AG04450 (cell line): ENCODE measurements at regions of chr11 and their contacts with region 1.

Region 1: DNA sequence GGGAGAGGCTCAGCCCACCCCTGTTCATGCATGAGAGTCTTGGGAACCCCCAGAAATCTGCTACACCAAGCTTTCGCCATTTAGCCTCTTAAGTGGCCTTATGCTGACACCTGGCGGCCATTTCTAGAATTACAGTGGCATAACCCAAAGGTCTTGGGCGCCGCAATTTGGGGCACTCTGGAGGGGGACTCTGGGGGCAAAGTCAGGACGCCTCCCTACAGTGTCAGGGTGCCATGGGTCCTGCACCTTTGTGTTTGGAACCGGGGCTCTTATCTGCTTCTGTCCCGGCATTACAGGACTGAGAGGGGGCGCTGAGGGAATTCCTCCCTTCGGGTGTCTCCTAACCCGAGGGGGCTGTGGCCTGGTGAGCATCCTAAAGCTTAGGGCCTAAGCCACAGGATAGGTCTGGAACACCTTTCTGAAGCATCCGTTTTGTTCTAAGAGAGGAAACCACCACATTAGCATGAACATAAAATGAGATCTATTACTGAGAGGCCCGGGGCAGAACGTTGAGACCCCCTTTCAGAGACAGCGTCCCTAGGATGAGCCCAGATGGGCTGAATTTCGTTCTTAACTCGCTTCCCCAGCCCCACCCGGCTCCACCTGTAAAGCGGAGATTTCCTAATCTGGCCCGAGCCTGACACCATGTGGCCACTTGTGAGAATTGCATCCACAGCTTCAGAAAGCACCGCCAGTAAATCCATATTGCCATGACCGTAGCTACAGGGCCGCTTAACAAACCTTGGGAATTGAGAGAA is 9.3 kb downstream of the INS start:
- DNase-seq: peak; percentile 27
- H3K4me3 ChIP-seq: no peak overlapping the region
- H3K27ac ChIP-seq: no peak overlapping the region
- H3K27me3 ChIP-seq: peaks cover 49% of the 10 kb centered on the region
- CTCF ChIP-seq: peak; percentile 78

Region 2: GRCh38 chr11:1882519-1883238 is 269.0 kb before region 1 on chr11:
- CTCF ChIA-PET with region 1: interaction called, 47 read pairs
- POLR2A ChIA-PET with region 1: no interaction called
- DNase-seq: peak; percentile 15
- H3K4me3 ChIP-seq: no peak overlapping the region
- H3K27ac ChIP-seq: no peak overlapping the region
- H3K27me3 ChIP-seq: peaks cover 13% of the 10 kb centered on the region
- CTCF ChIP-seq: peak; percentile 86

Region 3: GRCh38 chr11:1953489-1954266 is 198.0 kb before region 1 on chr11:
- CTCF ChIA-PET with region 1: interaction called, 39 read pairs
- POLR2A ChIA-PET with region 1: no interaction called
- DNase-seq: no peak
- H3K4me3 ChIP-seq: no peak overlapping the region
- H3K27ac ChIP-seq: no peak overlapping the region
- H3K27me3 ChIP-seq: no peaks in the 10 kb centered on the region
- CTCF ChIP-seq: 0 out of 2 replicates have a peak, but pooled peaks have one; percentile 8

Region 4: DNA sequence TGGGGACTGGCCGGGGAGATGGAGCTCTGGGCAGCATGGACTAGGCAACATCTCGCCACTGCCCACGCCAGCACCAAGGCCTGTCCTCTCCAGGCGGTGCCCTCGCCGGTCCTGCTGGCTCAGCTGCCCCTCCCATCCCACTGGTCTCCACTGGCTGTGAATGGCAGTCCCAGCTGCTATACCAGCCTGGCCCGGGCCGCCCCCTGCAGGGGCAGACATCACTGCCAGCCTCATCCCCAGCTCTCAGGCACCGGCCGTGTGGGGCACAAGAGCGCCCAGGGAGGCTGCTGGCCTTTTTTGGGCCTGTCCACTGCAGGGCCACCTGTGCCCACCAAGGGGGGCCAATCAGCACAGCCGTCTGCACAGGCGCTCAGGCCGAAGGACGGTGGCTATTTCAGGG is 124.0 kb before region 1 on chr11:
- CTCF ChIA-PET with region 1: interaction called, 557 read pairs
- POLR2A ChIA-PET with region 1: no interaction called
- DNase-seq: no peak
- H3K4me3 ChIP-seq: no peak overlapping the region
- H3K27ac ChIP-seq: no peak overlapping the region
- H3K27me3 ChIP-seq: no peaks in the 10 kb centered on the region
- CTCF ChIP-seq: no peak

Region 5: GRCh38 chr11:2166091-2166851 is 14.6 kb after region 1 on chr11:
- CTCF ChIA-PET with region 1: interaction called, 25 read pairs
- POLR2A ChIA-PET with region 1: no interaction called
- DNase-seq: no peak
- H3K4me3 ChIP-seq: no peak overlapping the region
- H3K27ac ChIP-seq: no peak overlapping the region
- H3K27me3 ChIP-seq: peaks cover 17% of the 10 kb centered on the region
- CTCF ChIP-seq: peak; percentile 46

Region 6: DNA sequence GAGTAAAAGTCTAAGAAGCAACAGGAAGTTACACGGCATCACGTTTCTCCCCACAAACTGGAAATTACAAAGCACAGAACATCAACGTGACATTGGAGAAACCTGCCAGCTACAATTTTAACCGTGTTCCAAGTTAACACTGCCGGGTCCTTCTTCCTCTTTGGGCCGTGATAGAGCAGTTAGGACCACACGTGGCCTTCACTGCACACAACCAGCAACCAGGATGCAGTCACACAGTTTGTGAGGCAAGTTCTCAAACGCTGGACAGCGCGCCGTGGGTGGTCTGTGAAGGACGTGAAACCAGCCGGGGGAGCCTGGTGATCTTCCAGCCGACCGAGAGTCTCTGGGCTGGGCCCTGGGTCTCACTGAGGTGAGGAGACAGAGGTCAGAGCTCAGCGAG is 135.4 kb after region 1 on chr11:
- CTCF ChIA-PET with region 1: no interaction called
- POLR2A ChIA-PET with region 1: no interaction called
- DNase-seq: no peak
- H3K4me3 ChIP-seq: no peak overlapping the region
- H3K27ac ChIP-seq: no peak overlapping the region
- H3K27me3 ChIP-seq: peaks cover 24% of the 10 kb centered on the region
- CTCF ChIP-seq: no peak